Activated CD4-positive, alpha-beta T cell treated with anti-CD3 and anti-CD28 coated beads for 36 hours (primary cell): ENCODE measurements at regions of chr21 and their contacts with region 1.

Region 1: GRCh38 chr21:31343680-31344480 is at the start of gene TIAM1:
- DNase-seq: peak; percentile 61
- ATAC-seq: peak; percentile 36
- H3K4me3 Mint-ChIP-seq: peak within 1 kb of the TSS; percentile 85
- H3K27ac Mint-ChIP-seq: peak within 1 kb of the TSS; percentile 93
- H3K4me1 Mint-ChIP-seq: peaks cover 56% of the 10 kb centered on the region
- H3K27me3 Mint-ChIP-seq: peaks cover 5% of the 10 kb centered on the region
- total RNA-seq, gene TIAM1: 60.7 to 72.6 TPM

Region 2: DNA sequence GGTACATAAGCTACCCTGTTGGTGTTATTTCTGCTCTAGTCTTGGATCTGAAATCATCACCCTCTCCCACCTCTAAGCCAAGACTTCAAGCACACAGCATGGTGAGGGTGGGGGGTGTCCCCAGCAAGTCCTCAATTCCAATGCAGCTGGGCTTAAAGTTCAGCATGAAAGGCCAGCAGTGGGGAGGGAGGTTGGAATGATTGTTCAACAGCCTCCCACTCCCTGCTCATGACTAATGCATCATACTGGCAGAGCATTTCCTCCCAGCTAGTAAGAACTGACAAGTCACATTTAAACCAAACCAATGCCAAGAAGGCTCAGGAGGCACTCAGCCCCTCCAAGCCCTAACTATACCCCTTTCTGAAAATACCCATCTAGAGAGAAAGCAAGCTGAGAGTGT is 49.9 kb before region 1 on chr21:
- CTCF ChIA-PET with region 1: no interaction called
- POLR2A ChIA-PET with region 1: no interaction called
- intact Hi-C with region 1: loop called in 1 of 2 experiments (anchors 1 kb)
- DNase-seq: peak; percentile 85
- ATAC-seq: peak; percentile 94
- H3K4me3 Mint-ChIP-seq: no peak overlapping the region
- H3K27ac Mint-ChIP-seq: peak overlapping the region; percentile 79
- H3K4me1 Mint-ChIP-seq: peaks cover 47% of the 10 kb centered on the region
- H3K27me3 Mint-ChIP-seq: no peaks in the 10 kb centered on the region

Region 3: GRCh38 chr21:31326522-31327242 is 17.2 kb before region 1 on chr21:
- CTCF ChIA-PET with region 1: interaction called, 8 read pairs
- POLR2A ChIA-PET with region 1: interaction called, 9 read pairs
- intact Hi-C with region 1: loop called (anchors 1 kb)
- DNase-seq: peak; percentile 80
- ATAC-seq: peak; percentile 93
- H3K4me3 Mint-ChIP-seq: peak overlapping the region; percentile 28
- H3K27ac Mint-ChIP-seq: peak overlapping the region; percentile 89
- H3K4me1 Mint-ChIP-seq: peaks cover 32% of the 10 kb centered on the region
- H3K27me3 Mint-ChIP-seq: no peaks in the 10 kb centered on the region

Region 4: DNA sequence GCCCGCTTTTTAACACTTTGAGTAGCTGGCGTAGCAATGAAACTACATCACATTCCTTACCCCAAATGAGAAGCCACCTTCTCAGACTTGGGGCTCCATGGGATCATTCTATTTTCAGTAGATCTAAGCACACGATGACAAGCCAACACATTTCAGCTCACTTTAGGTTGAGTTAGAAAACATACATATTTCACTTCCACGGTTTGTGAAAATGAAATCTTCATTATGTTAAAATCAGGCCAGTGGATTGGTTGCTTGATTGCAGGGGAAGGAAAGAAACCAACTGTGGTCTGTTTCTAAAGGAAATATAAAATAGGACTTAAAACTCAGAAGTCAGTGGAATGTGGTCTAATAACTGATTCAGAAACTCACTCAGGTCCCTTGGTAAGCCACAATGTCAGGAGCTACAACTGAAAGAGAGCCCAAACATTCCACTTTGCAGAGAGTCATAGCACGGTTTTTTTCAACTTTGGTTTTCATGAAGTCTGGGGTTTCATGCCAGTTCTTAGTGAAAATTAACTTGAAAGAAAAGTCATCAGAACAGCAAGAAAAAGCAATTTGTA is 82.4 kb after region 1 on chr21:
- CTCF ChIA-PET with region 1: no interaction called
- POLR2A ChIA-PET with region 1: interaction called, 3 read pairs
- intact Hi-C with region 1: loop called in 1 of 2 experiments (anchors 1 kb)
- DNase-seq: peak; percentile 22
- ATAC-seq: peak; percentile 89
- H3K4me3 Mint-ChIP-seq: peak overlapping the region; percentile 18
- H3K27ac Mint-ChIP-seq: peak overlapping the region; percentile 53
- H3K4me1 Mint-ChIP-seq: peaks cover 20% of the 10 kb centered on the region
- H3K27me3 Mint-ChIP-seq: no peaks in the 10 kb centered on the region

Region 5: DNA sequence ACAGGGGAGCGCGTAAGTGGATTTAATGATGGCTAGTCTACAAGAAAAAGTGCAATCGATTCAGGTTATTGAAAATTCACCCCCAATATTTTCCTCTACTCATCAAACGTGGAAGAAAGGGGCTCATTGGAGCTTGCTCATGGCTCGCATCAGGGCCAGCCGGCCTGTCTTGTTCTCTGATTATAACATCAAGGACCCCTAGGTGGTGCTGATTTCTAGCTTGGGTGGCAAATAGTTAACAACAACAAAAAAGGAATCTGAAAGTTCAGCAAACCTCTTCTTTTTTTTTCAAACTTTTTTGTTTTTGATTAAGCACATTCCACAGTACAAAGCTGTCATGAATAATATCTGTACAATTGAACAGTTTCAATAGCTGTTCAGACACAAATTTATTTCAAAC is 279.8 kb after region 1 on chr21:
- CTCF ChIA-PET with region 1: no interaction called
- POLR2A ChIA-PET with region 1: no interaction called
- intact Hi-C with region 1: no loop called
- DNase-seq: no peak
- ATAC-seq: no peak
- H3K4me3 Mint-ChIP-seq: no peak overlapping the region
- H3K27ac Mint-ChIP-seq: no peak overlapping the region
- H3K4me1 Mint-ChIP-seq: peaks cover 9% of the 10 kb centered on the region
- H3K27me3 Mint-ChIP-seq: peaks cover 1% of the 10 kb centered on the region